HepG2 (cell line): ENCODE measurements at regions of chr10 and their contacts with region 1.

Region 1: GRCh38 chr10:53601260-53601875 is 828.8 kb upstream of the MBL2 start:
- DNase-seq: peak; percentile 11
- ATAC-seq: peak; percentile 77
- H3K4me3 ChIP-seq: no peak overlapping the region
- H3K27ac ChIP-seq: no peak overlapping the region
- H3K4me1 ChIP-seq: no peaks in the 10 kb centered on the region
- H3K27me3 ChIP-seq: no peaks in the 10 kb centered on the region
- CTCF ChIP-seq: peak; percentile 71
- EP300 ChIP-seq: no peak
- POLR2A ChIP-seq: no peak
- RAD21 ChIP-seq: no peak

Region 2: GRCh38 chr10:53537508-53537907 is 63.9 kb before region 1 on chr10:
- CTCF ChIA-PET with region 1: no interaction called
- POLR2A ChIA-PET with region 1: no interaction called
- in situ Hi-C with region 1: no loop called
- intact Hi-C with region 1: no loop called
- DNase-seq: no peak
- ATAC-seq: no peak
- H3K4me3 ChIP-seq: no peak overlapping the region
- H3K27ac ChIP-seq: no peak overlapping the region
- H3K4me1 ChIP-seq: no peaks in the 10 kb centered on the region
- H3K27me3 ChIP-seq: no peaks in the 10 kb centered on the region; a peak in 1 of 5 replicates
- CTCF ChIP-seq: no peak
- EP300 ChIP-seq: no peak
- POLR2A ChIP-seq: no peak
- RAD21 ChIP-seq: no peak

Region 3: DNA sequence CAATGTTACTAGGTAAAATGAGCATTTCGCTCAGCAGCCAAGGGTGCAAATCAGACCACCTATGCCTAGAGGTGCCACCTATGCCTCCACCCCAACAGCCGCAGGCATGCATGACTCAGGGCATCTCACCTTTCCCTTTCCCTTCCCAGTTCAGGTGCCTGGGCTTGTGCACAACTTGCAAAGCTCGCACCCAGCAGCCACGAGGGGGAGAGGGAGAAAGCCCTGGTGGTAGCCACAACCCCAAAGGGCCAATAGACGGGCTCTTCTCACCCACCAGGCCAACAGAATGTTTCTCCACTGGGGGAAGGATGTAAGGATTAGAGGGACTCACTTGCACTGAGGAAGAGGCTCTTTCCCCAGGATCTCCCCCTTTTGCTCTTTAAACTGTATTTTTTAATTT is 1662.0 kb after region 1 on chr10:
- CTCF ChIA-PET with region 1: interaction called, 3 read pairs
- POLR2A ChIA-PET with region 1: no interaction called
- in situ Hi-C with region 1: no loop called
- intact Hi-C with region 1: loop called (anchors 5 kb)
- DNase-seq: no peak
- ATAC-seq: peak; percentile 79
- H3K4me3 ChIP-seq: no peak overlapping the region
- H3K27ac ChIP-seq: no peak overlapping the region
- H3K4me1 ChIP-seq: no peaks in the 10 kb centered on the region
- H3K27me3 ChIP-seq: no peaks in the 10 kb centered on the region
- CTCF ChIP-seq: no peak
- EP300 ChIP-seq: no peak
- POLR2A ChIP-seq: no peak
- RAD21 ChIP-seq: no peak